Activated CD8-positive, alpha-beta memory T cell treated with anti-CD3 and anti-CD28 coated beads, Interleukin-2, amount 10 ng/mL, durations not matched to agents 7 days and 5 days (primary cell): ENCODE measurements at regions of chr6 and their contacts with region 1.

Region 1: DNA sequence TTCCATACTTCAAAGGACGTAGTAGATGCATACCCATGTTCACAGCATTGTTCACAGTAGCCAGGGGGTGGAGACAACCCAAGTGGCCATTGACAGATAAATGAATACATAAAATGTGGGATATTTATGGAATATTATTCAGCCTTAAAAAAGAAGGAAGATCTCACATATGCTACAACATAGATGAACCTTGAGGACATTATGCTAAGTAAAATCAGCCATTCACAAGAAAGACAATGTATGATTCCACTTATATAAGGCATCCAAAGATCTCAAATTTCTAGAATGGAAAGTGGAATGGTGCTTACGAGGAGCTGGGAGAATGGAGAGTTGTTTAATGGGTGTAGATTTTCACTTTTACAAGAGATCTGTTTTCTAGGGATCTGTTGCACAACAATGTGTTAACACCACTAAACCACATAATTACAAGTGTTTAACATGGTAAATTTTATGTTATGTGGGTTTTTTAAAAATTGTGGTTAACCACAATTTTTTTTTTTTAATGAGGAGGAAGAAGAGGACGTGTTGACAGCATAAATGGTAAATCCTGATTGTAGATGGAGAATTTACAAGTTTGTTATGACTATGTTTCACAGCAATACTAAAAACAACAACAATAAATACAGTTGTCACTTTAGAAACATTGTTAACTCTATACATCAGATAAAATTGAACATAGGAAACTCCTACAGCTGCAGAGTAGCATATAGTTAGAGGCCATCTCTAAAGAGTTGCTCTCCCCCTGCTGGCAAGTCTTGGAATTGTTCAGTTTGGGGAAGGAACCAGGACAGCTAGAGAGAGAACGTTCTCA is 41.6 kb downstream of the CCN2 start:
- DNase-seq: peak; percentile 81
- ATAC-seq: peak; percentile 92
- H3K4me3 Mint-ChIP-seq: no peak overlapping the region
- H3K27ac Mint-ChIP-seq: peak overlapping the region; percentile 40
- H3K4me1 Mint-ChIP-seq: peaks cover 17% of the 10 kb centered on the region
- H3K27me3 Mint-ChIP-seq: peaks cover 32% of the 10 kb centered on the region

Region 2: DNA sequence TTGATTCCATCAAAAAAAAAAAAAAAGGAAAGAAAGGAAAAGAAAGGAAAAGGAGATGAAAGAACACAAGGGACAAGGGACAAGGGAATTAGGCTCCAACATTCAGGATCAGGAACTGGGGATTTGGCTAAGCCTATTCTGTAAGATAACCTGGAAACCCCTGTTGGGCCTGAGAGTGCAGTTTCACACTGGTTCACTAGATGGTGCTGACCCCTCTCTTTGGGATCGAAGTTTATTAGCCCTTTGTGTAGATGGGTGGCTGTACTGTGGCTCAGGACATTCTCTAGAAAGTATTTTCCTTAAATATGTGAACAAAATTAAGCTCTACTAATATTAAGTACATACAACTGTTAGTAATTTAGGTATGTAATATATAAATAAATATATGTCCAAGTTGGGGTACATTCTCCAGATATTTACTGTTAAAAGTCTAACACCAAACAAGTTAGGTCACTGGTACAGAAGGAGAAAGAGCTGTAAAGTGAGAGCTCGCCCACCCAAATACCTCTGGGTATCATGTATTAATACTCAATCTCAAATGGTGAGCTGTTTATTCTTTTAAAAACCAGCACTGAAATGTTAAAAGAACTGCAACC is 214.7 kb before region 1 on chr6:
- CTCF ChIA-PET with region 1: interaction called, 22 read pairs
- DNase-seq: peak; percentile 55
- ATAC-seq: peak; percentile 71
- H3K4me3 Mint-ChIP-seq: no peak overlapping the region
- H3K27ac Mint-ChIP-seq: no peak overlapping the region
- H3K4me1 Mint-ChIP-seq: no peaks in the 10 kb centered on the region
- H3K27me3 Mint-ChIP-seq: peaks cover 12% of the 10 kb centered on the region